Aorta (tissue), 5 donors: ENCODE measurements at regions of chr12 and their contacts with region 1.

Region 1: DNA sequence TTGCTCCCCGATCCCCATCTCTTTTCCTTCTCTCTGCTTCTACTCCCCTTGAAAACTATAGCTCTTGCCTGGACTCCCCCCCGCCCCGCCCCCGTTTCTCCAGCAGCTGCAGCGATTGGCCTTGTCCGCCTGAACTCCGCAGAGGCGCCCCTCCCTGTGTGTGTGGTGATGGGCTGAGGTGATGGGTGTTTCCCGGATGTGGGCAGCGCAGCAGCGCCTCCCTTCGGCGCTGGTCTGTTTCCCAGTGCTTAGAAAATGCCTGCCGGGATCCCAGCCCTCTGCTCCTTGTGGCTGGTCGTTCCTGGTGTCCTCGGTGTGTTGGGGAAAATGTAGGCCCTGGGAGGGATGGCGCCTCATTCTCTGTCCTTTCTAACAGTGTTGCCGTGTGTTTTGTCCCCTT is 43.3 kb downstream of the GALNT8 start:
- DNase-seq: peak in 1 of 2 donors; percentile 56
- ATAC-seq: no peak
- H3K4me3 ChIP-seq: no peak overlapping the region
- H3K27ac ChIP-seq: no peak overlapping the region
- H3K4me1 ChIP-seq: no peaks in the 10 kb centered on the region
- H3K27me3 ChIP-seq: no peaks in the 10 kb centered on the region

Region 2: DNA sequence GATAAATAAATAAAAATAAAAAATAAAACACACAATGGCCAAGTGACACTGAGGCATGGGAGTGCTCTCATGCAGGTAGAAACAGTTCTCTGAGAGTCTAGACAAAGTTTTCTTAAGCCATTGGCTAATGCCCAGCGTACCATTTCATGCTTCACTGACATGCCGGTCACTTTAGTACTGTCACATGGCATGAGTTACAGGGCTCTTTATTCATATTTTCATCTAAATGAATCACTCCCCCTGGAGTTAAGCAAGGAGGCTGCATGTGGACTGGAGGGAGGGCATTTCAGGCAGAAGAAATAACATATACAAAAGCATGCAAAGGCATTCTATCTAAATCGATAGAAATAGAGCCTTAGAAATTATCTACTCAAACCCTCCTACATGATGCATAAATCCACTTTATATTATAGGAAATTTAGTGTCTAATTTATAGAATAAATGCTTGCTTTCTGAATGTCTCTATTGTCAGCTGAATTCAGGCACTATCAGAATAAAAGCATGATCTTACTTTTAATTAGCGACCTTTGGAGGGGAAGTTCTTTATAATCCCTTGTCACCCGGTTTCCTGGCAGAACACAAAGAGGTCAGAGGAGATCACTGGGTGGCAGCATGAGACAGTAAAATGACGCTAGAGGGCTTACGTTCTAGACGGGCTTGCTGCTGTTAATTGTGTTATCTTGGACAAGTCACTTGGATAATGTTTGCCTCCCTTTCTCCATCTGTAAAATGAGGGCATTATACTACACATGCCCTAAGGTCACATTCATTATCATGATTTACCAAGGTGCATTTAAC is 184.0 kb before region 1 on chr12:
- intact Hi-C with region 1: loop called in 1 of 2 experiments (anchors 5 kb)
- DNase-seq: no peak
- ATAC-seq: no peak
- H3K4me3 ChIP-seq: no peak overlapping the region
- H3K27ac ChIP-seq: no peak overlapping the region
- H3K4me1 ChIP-seq: no peaks in the 10 kb centered on the region
- H3K27me3 ChIP-seq: peaks cover 0 to 2% of the 10 kb centered on the region in 2 donors

Region 3: DNA sequence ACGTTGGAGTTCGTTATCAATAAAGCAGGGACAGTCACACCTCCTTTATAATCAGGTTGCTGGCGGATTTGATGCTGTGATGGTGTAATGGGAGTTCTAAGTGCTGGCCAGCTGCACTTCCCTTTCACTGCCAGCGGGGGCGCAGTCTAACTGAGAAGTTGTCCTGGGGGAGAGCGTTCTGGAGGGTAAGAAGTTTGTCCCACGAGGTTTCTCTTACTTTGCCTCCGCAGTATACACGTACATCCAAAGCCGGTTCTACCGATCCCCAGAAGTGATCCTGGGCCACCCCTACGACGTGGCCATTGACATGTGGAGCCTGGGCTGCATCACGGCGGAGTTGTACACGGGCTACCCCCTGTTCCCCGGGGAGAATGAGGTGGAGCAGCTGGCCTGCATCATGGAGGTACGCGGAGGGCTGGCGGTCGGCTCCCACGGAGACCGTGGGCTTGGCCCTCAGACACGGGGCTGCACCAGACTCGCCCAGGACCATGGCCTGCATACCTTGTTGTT is 158.8 kb before region 1 on chr12:
- intact Hi-C with region 1: loop called (anchors 10 kb)
- DNase-seq: peak; percentile 84 to 89
- ATAC-seq: peak; percentile 95
- H3K4me3 ChIP-seq: peak overlapping the region; percentile 71 to 82
- H3K27ac ChIP-seq: peak overlapping the region in 1 of 2 donors; percentile 26
- H3K4me1 ChIP-seq: no peaks in the 10 kb centered on the region
- H3K27me3 ChIP-seq: no peaks in the 10 kb centered on the region

Region 4: DNA sequence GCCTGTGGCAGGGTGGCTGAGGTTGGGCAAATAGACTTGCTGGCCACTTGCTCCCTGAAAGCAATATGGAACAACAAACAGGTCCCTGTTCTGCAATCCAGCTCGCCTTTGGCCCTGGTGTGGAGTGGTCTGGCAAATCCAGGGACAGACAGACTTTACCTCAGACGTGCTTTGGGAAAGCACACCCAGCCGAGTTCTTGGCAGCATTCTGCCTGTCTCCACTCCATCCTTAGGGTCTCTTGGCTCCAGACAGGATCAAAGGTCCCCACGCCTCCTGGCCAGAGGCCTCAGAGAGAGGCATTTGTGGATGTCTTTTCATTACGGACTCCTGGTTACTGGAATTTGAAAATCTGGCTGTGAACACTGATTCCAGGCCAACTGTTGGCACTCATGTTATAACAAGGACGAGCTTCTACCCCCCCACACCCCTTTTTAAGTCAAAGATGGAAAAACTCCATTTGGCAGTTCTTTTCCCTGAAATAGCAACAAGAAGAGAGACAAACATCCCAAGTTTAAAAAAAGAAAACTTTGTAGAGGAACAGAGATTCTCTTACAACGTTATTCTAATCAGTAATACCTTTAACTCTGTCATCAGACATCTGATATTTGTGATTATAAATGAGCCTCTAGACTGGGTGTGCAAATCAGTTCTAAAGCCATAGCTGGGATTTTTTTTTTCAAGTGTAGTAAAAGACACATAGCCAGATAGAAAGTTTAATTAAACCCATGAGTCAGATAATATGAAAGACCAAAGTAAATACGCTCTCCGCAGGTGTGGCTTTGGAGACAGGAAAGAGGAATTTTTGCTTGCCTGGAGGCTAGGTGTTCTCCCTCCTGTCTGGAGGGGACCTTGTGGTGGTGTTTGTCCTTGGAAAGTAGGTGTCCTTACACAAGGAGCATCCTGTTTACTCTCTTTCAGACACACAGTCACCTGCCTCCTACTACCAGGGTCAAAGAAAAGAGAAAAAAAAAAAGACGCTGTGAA is 17.4 kb after region 1 on chr12:
- intact Hi-C with region 1: loop called in 1 of 2 experiments (anchors 1 kb)
- DNase-seq: peak in 1 of 2 donors; percentile 60
- ATAC-seq: peak; percentile 60
- H3K4me3 ChIP-seq: no peak overlapping the region
- H3K27ac ChIP-seq: peak overlapping the region in 1 of 2 donors; percentile 69
- H3K4me1 ChIP-seq: peaks cover 0 to 2% of the 10 kb centered on the region in 2 donors
- H3K27me3 ChIP-seq: no peaks in the 10 kb centered on the region